GM12878 (cell line): ENCODE measurements at regions of chr11 and their contacts with region 1.

Region 1: DNA sequence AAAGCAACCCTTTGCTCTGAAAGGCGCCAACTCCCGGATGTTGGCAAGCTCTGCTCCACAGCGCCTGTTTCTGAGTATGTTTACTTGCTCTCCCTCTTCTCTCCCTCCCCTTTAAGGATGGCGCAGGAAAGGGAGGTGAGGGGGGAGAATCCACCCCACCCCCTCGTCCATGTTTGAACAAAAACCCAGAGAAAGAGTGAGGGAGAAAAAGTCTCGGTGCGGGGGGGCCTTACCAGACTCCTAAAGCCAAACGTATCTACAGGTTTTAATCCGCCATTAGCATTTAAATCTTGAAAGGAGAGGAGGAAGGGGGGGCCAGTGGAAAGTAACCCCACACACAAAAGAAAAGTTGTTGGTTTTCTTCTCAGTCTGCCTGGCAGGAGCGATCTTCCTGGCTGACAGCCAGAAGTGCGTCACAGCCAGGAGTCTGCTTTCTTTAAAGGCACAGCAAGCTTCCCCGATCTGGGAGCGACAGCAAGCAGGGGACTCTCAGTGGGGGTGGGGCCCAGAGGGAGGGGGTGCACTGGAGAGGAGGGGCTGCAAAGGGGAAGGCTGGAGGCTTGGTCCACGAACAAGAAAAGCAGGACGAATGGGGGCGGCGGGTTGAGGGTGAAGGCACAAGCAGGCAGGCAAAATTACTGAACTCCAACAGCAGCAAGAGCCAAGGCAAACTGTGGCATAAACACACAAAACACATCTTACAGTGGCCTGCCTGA is 39.5 kb downstream of the NUMA1 start:
- DNase-seq: no peak
- ATAC-seq: peak; percentile 63
- H3K4me3 ChIP-seq: peak overlapping the region; percentile 65
- H3K27ac ChIP-seq: peak overlapping the region; percentile 71
- H3K4me1 ChIP-seq: peaks cover 35% of the 10 kb centered on the region
- H3K27me3 ChIP-seq: no peaks in the 10 kb centered on the region
- CTCF ChIP-seq: no peak
- EP300 ChIP-seq: no peak
- POLR2A ChIP-seq: peak; percentile 44
- RAD21 ChIP-seq: no peak

Region 2: GRCh38 chr11:70948855-70949569 is 1091.9 kb before region 1 on chr11:
- CTCF ChIA-PET with region 1: no interaction called
- POLR2A ChIA-PET with region 1: no interaction called
- RAD21 ChIA-PET with region 1: no interaction called
- SMC1A ChIA-PET with region 1: no interaction called
- in situ Hi-C with region 1: no loop called
- intact Hi-C with region 1: no loop called
- DNase-seq: no peak
- ATAC-seq: no peak
- H3K4me3 ChIP-seq: no peak overlapping the region
- H3K27ac ChIP-seq: no peak overlapping the region
- H3K4me1 ChIP-seq: no peaks in the 10 kb centered on the region
- H3K27me3 ChIP-seq: no peaks in the 10 kb centered on the region
- CTCF ChIP-seq: no peak
- EP300 ChIP-seq: no peak
- POLR2A ChIP-seq: no peak
- RAD21 ChIP-seq: no peak

Region 3: DNA sequence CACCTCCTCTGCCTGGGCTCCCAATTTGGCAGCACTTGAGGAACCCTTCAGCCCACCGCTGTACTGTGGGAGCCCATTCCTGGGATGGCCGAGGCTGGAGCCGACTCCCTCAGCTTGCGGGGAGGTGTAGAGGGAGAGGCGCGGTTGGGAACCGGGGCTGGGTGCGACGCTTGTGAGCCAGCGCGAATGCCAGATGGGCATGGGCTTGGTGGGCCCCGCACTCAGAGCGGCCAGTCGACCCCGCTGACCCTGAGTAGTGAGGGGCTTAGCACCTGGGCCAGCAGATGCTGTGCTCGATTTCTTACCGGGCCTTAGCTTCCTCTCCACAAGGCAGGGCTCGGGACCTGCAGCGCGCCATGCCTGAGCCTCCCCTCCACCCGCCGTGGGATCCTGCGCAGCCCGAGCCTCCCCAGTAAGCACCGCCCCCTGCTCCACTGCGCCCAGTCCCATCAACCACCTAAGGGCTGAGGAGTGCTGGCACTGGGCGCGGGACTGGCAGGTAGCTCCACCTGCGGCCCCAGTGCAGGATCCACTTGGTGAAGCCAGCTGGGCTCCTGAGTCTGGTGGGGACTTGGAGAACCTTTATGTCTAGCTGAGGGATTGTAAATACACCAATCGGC is 266.2 kb before region 1 on chr11:
- CTCF ChIA-PET with region 1: no interaction called
- POLR2A ChIA-PET with region 1: no interaction called
- RAD21 ChIA-PET with region 1: no interaction called
- SMC1A ChIA-PET with region 1: no interaction called
- in situ Hi-C with region 1: no loop called
- intact Hi-C with region 1: no loop called
- DNase-seq: no peak
- ATAC-seq: no peak
- H3K4me3 ChIP-seq: no peak overlapping the region
- H3K27ac ChIP-seq: no peak overlapping the region
- H3K4me1 ChIP-seq: no peaks in the 10 kb centered on the region
- H3K27me3 ChIP-seq: no peaks in the 10 kb centered on the region
- CTCF ChIP-seq: no peak
- EP300 ChIP-seq: no peak
- POLR2A ChIP-seq: no peak
- RAD21 ChIP-seq: no peak

Region 4: DNA sequence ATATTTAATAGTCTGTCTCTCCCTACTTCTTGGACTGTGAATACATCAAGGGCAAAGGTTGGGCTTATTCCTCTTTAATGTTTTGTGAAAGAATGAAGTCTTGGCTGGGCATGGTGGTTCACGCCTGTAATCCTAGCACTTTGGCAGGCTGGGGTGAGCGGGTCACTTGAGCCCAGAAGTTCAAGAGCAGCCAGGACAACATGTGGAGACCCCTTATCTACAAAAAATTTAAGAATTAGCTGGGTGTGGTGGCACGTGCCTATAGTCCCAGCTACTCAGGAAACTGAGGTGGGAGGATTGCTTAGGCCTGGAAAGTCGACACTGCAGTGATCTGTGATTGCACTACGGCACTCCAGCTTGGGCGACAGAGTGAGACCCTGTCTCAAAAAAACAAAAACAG is 91.8 kb before region 1 on chr11:
- CTCF ChIA-PET with region 1: no interaction called
- POLR2A ChIA-PET with region 1: no interaction called
- RAD21 ChIA-PET with region 1: no interaction called
- SMC1A ChIA-PET with region 1: no interaction called
- in situ Hi-C with region 1: no loop called
- intact Hi-C with region 1: no loop called
- DNase-seq: no peak
- ATAC-seq: no peak
- H3K4me3 ChIP-seq: no peak overlapping the region
- H3K27ac ChIP-seq: no peak overlapping the region
- H3K4me1 ChIP-seq: peaks cover 5% of the 10 kb centered on the region; the same call in 1 of the 2 replicates
- H3K27me3 ChIP-seq: no peaks in the 10 kb centered on the region
- CTCF ChIP-seq: no peak
- EP300 ChIP-seq: no peak
- POLR2A ChIP-seq: no peak
- RAD21 ChIP-seq: no peak

Region 5: DNA sequence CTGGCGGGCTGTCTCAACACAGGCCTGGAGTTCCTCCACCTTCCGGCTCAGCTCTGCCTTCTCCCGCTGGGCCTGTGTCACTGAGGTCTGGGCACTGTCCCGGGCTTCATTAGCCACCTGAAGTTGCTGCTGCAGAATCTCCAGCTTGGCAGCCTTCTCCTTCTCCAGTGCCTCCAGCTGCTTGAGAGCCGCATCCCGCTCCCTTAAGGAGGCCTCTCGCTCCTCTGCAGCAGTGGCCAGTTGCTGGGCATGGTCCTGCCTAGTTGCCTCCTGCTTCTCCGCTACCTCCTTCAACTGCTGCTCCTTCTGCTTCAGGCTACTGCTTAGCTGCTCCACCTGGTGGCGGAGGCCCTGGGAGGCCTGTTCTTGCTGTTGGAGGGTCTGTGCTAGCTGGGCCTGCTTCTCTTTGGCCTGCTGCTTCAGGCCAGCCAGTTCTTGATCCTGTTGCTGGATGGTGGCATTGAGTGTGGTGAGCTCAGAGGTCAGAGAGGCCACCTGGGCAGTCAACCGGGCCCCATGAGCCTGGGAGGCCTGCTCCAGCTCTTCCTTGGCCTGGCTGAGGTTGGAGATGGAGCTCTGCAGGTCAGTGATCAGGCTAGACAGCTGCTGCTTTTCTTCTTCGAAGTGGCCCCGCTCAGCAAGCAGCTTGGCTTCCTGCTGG is 25.2 kb before region 1 on chr11:
- CTCF ChIA-PET with region 1: interaction called, 10 read pairs
- POLR2A ChIA-PET with region 1: interaction called, 8 read pairs
- RAD21 ChIA-PET with region 1: interaction called, 4 read pairs
- SMC1A ChIA-PET with region 1: no interaction called
- in situ Hi-C with region 1: no loop called
- intact Hi-C with region 1: no loop called
- DNase-seq: no peak
- ATAC-seq: peak; percentile 65
- H3K4me3 ChIP-seq: no peak overlapping the region
- H3K27ac ChIP-seq: no peak overlapping the region
- H3K4me1 ChIP-seq: no peaks in the 10 kb centered on the region
- H3K27me3 ChIP-seq: no peaks in the 10 kb centered on the region
- CTCF ChIP-seq: peak; percentile 40 to 72 (median 62); a peak in 5 of 6 replicates
- EP300 ChIP-seq: no peak
- POLR2A ChIP-seq: no peak
- RAD21 ChIP-seq: peak; percentile 55

Region 6: DNA sequence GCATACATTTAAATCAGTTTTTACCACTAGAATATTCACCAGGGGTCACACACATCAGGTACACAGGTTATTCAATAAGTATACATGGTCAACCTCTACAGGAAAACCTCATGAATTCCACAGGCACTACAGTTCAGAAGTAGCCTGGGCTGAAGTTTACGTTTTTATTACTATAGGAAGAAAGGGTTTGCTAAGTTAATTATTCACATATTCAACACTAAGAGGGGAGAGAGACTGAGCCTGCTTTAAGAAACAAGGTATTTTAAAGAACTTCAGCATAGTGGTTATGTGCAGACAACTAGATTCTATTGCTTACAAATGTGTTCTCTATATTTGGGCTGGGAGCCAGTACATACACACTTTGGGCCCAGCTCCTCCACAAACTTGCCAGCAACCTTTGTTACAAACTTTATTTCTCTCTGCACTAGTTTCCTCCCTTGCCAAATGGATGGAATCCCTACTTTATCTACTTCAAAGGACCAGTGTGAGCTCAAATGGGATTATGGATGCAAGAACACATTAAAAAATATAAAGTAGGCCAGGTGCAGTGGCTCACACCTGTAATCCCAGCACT is 10.3 kb before region 1 on chr11:
- CTCF ChIA-PET with region 1: interaction called, 63 read pairs
- POLR2A ChIA-PET with region 1: interaction called, 5 read pairs
- RAD21 ChIA-PET with region 1: interaction called, 26 read pairs
- SMC1A ChIA-PET with region 1: interaction called, 28 read pairs
- in situ Hi-C with region 1: no loop called
- intact Hi-C with region 1: no loop called
- DNase-seq: no peak
- ATAC-seq: no peak
- H3K4me3 ChIP-seq: no peak overlapping the region
- H3K27ac ChIP-seq: no peak overlapping the region
- H3K4me1 ChIP-seq: no peaks in the 10 kb centered on the region
- H3K27me3 ChIP-seq: no peaks in the 10 kb centered on the region
- CTCF ChIP-seq: no peak
- EP300 ChIP-seq: no peak
- POLR2A ChIP-seq: no peak
- RAD21 ChIP-seq: no peak

Region 7: GRCh38 chr11:72069787-72070251 is 28.9 kb after region 1 on chr11:
- CTCF ChIA-PET with region 1: interaction called, 8 read pairs
- POLR2A ChIA-PET with region 1: interaction called, 15 read pairs
- RAD21 ChIA-PET with region 1: interaction called, 46 read pairs
- SMC1A ChIA-PET with region 1: interaction called, 48 read pairs
- in situ Hi-C with region 1: no loop called
- intact Hi-C with region 1: no loop called
- DNase-seq: no peak
- ATAC-seq: peak; percentile 92
- H3K4me3 ChIP-seq: peak overlapping the region; percentile 59; the same call in 1 of the 2 replicates
- H3K27ac ChIP-seq: peak overlapping the region; percentile 63
- H3K4me1 ChIP-seq: peaks cover 27% of the 10 kb centered on the region
- H3K27me3 ChIP-seq: no peaks in the 10 kb centered on the region
- CTCF ChIP-seq: no peak
- EP300 ChIP-seq: no peak
- POLR2A ChIP-seq: no peak
- RAD21 ChIP-seq: no peak

Region 8: GRCh38 chr11:72080256-72080974 is 39.5 kb after region 1 on chr11 and contains the starts of genes LRRC51 and NUMA1:
- CTCF ChIA-PET with region 1: interaction called, 14 read pairs
- POLR2A ChIA-PET with region 1: interaction called, 15 read pairs
- RAD21 ChIA-PET with region 1: interaction called, 16 read pairs
- SMC1A ChIA-PET with region 1: interaction called, 48 read pairs
- in situ Hi-C with region 1: no loop called
- intact Hi-C with region 1: loop called (anchors 2 kb)
- DNase-seq: peak; percentile 99
- ATAC-seq: peak; percentile 97
- H3K4me3 ChIP-seq: peak within 1 kb of the TSS; percentile 77
- H3K27ac ChIP-seq: peak within 1 kb of the TSS; percentile 78
- H3K4me1 ChIP-seq: peaks cover 16% of the 10 kb centered on the region
- H3K27me3 ChIP-seq: no peaks in the 10 kb centered on the region
- CTCF ChIP-seq: no peak
- EP300 ChIP-seq: no peak
- POLR2A ChIP-seq: peak; percentile 83
- RAD21 ChIP-seq: no peak
- polyA plus RNA-seq, gene LRRC51: 4.7 to 6.2 TPM
- polyA plus RNA-seq, gene NUMA1: 5.5 to 7.1 TPM

Region 9: DNA sequence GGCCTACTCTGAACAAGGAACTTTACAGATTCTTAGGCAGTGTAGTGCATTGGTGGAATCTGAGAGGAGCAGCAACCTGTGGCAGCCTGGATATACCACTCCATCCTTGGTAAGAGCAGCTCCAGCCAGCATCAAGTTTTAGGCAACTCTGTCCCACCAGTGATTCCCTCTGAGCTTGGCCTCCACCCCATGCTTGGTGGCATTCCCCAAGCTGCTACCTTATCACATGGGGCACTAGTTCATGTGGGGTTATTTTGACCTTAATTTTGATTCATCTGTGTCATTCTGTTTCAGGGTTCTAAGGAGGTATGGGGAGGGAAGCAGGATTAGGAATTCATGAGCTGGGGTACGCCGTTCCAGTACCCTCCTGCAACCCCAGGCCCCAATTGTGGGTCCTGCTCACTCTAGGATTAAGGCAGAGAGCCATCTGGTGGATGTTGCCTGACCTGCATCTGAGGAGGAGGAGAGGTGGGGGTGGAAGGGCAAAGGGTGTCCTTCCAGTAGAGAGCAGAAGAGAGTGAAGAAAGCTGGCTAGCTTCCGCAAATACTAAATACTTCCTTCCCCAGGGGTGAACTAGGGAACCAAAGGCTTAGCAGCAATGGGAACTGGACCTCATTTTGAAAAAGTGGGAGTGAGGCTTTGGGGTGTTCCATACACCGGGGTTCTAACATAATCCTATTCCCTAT is 50.3 kb after region 1 on chr11:
- CTCF ChIA-PET with region 1: interaction called, 416 read pairs
- POLR2A ChIA-PET with region 1: interaction called, 3 read pairs
- RAD21 ChIA-PET with region 1: interaction called, 17 read pairs
- SMC1A ChIA-PET with region 1: interaction called, 30 read pairs
- in situ Hi-C with region 1: no loop called
- intact Hi-C with region 1: no loop called
- DNase-seq: no peak
- ATAC-seq: peak; percentile 99
- H3K4me3 ChIP-seq: no peak overlapping the region
- H3K27ac ChIP-seq: no peak overlapping the region
- H3K4me1 ChIP-seq: no peaks in the 10 kb centered on the region
- H3K27me3 ChIP-seq: no peaks in the 10 kb centered on the region
- CTCF ChIP-seq: peak; percentile 84 to 91 (median 89)
- EP300 ChIP-seq: no peak
- POLR2A ChIP-seq: peak; percentile 33
- RAD21 ChIP-seq: peak; percentile 93

Region 10: DNA sequence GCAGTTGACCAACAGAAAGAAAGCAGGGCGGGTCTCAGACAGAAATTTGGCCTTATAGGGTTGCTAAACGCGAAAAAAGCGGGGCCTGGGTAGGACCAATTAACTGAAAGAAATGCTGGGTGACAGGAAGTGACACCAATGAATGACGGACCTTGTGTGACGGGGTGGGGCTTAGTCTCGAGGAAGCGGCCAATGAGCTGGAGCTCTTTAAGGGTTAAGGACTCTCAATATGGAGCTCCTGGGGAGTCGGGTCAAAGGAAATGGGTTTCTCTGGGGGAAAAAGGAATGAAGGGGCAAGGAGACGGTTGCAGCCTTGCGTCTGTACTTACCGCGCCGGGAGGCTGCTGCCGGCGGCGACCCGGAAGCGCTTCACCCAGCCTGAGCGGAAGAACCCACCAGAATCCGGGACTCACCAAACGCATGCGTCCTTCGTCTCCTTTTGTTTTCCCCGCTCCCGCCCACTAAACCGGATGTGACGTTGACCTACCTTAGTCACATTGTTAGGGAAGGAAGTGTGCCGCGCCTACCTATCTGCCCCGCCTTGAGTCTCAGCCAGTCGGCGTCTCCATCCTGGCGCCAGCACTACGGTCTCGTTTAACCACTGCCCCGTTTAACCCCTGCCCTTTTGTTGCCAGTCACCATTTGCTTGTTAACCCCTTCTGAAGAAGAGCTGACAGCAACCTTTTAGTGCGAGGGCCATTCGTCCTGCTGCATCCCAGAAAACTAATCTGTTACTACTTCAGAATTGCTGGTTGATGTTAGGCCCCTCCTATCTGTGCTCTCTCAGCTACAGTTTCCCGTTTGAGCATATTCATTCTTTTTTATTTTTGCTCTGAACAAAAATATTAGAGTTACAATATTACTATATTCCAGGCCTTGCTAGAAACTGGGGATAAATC is 71.7 kb after region 1 on chr11 and contains the start of gene ANAPC15:
- CTCF ChIA-PET with region 1: interaction called, 3 read pairs
- POLR2A ChIA-PET with region 1: interaction called, 11 read pairs
- RAD21 ChIA-PET with region 1: interaction called, 7 read pairs
- SMC1A ChIA-PET with region 1: interaction called, 4 read pairs
- in situ Hi-C with region 1: no loop called
- intact Hi-C with region 1: no loop called
- DNase-seq: peak; percentile 99
- ATAC-seq: peak; percentile 96
- H3K4me3 ChIP-seq: peak within 1 kb of the TSS; percentile 69
- H3K27ac ChIP-seq: peak within 1 kb of the TSS; percentile 99
- H3K4me1 ChIP-seq: peaks cover 7% of the 10 kb centered on the region
- H3K27me3 ChIP-seq: no peaks in the 10 kb centered on the region
- CTCF ChIP-seq: no peak
- EP300 ChIP-seq: no peak
- POLR2A ChIP-seq: peak; percentile 99
- RAD21 ChIP-seq: no peak
- polyA plus RNA-seq, gene ANAPC15: 230 to 372 TPM